T-cell (primary cell): ENCODE measurements at regions of chrX and their contacts with region 1.

Region 1: DNA sequence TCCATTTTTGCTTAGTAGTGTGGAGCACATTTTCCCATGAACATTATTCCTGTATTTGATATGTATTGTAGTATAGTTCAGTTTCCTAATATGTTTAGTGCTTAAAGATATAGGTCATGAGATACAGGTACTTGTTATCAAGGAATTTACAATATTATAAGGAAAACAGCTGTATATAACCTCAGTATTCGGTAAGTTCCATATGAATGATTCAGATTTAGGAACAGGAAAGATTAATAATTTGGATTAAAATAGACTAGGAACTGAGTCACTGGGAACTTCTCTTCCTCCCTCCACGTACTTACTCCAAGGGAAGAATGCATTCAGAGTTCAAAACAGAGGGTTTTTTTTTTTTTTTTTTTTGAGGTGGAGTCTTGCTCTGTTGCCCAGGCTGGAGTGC is 20.0 kb downstream of the DIAPH2 start:
- DNase-seq: no peak
- ATAC-seq: no peak
- H3K4me3 ChIP-seq: no peak overlapping the region
- H3K4me3 Mint-ChIP-seq: no peak overlapping the region
- H3K27ac ChIP-seq: no peak overlapping the region
- H3K27ac Mint-ChIP-seq: no peak overlapping the region
- H3K4me1 ChIP-seq: no peaks in the 10 kb centered on the region
- H3K4me1 Mint-ChIP-seq: peaks cover 5 to 13% (median 6%) of the 10 kb centered on the region in 3 donors
- H3K27me3 ChIP-seq: no peaks in the 10 kb centered on the region
- H3K27me3 Mint-ChIP-seq: no peaks in the 10 kb centered on the region

Region 2: DNA sequence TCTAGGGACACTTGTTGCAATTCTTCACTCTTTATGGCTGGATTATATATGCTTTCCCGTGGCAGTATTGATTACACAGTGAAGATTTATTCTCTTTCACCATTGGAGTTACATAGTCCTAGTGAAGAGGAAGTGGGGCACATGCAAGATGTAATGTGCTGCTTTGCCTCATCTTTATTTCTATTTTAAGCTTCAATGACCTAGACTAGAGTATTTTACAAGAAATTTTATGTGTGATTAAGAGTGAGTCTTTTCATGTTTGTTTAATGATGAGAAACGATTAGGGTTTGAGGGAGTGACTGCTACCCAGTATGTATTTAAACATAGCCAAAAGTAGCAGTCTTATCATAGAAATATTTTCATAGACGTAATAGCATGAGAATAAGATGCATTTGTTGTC is 10.9 kb after region 1 on chrX:
- CTCF ChIA-PET with region 1: interaction called in 1 of 2 experiments, 10 read pairs
- POLR2A ChIA-PET with region 1: no interaction called
- DNase-seq: no peak
- ATAC-seq: no peak
- H3K4me3 ChIP-seq: no peak overlapping the region
- H3K4me3 Mint-ChIP-seq: no peak overlapping the region
- H3K27ac ChIP-seq: no peak overlapping the region
- H3K27ac Mint-ChIP-seq: no peak overlapping the region
- H3K4me1 ChIP-seq: no peaks in the 10 kb centered on the region
- H3K4me1 Mint-ChIP-seq: peaks cover 0 to 31% (median 9%) of the 10 kb centered on the region in 3 donors
- H3K27me3 ChIP-seq: no peaks in the 10 kb centered on the region
- H3K27me3 Mint-ChIP-seq: peaks cover 0 to 7% of the 10 kb centered on the region in 2 donors